ENCODE measurements at regions of chr1 and their contacts with region 1.

Region 1: GRCh38 chr1:196148367-196148970 is 459.8 kb downstream of the KCNT2 start:
- DNase-seq: no peak
- ATAC-seq: no peak
- H3K4me3 ChIP-seq: no peak overlapping the region
- H3K27ac ChIP-seq: no peak overlapping the region
- H3K4me1 ChIP-seq: peaks cover 0 to 8% (median 0%) of the 10 kb centered on the region in 9 donors
- H3K27me3 ChIP-seq: no peaks in the 10 kb centered on the region
- CTCF ChIP-seq: peak; percentile 37 to 75 (median 62)

Region 2: GRCh38 chr1:195939844-195940243 is 208.6 kb before region 1 on chr1:
- intact Hi-C with region 1: loop called in 1 of 10 experiments (anchors 5 kb)
- DNase-seq: no peak
- ATAC-seq: peak in 1 of 8 donors; percentile 50
- H3K4me3 ChIP-seq: no peak overlapping the region
- H3K27ac ChIP-seq: no peak overlapping the region
- H3K4me1 ChIP-seq: no peaks in the 10 kb centered on the region
- H3K27me3 ChIP-seq: no peaks in the 10 kb centered on the region
- CTCF ChIP-seq: peak in 6 of 9 donors; percentile 24 to 39 (median 34)

Region 3: GRCh38 chr1:196309386-196309785 is 160.9 kb after region 1 on chr1:
- intact Hi-C with region 1: loop called in 6 of 10 experiments (anchors 5 to 10 kb)
- DNase-seq: no peak
- ATAC-seq: no peak
- H3K4me3 ChIP-seq: no peak overlapping the region
- H3K27ac ChIP-seq: no peak overlapping the region
- H3K4me1 ChIP-seq: no peaks in the 10 kb centered on the region
- H3K27me3 ChIP-seq: no peaks in the 10 kb centered on the region
- CTCF ChIP-seq: peak in 7 of 9 donors; percentile 16 to 50 (median 33)

Region 4: DNA sequence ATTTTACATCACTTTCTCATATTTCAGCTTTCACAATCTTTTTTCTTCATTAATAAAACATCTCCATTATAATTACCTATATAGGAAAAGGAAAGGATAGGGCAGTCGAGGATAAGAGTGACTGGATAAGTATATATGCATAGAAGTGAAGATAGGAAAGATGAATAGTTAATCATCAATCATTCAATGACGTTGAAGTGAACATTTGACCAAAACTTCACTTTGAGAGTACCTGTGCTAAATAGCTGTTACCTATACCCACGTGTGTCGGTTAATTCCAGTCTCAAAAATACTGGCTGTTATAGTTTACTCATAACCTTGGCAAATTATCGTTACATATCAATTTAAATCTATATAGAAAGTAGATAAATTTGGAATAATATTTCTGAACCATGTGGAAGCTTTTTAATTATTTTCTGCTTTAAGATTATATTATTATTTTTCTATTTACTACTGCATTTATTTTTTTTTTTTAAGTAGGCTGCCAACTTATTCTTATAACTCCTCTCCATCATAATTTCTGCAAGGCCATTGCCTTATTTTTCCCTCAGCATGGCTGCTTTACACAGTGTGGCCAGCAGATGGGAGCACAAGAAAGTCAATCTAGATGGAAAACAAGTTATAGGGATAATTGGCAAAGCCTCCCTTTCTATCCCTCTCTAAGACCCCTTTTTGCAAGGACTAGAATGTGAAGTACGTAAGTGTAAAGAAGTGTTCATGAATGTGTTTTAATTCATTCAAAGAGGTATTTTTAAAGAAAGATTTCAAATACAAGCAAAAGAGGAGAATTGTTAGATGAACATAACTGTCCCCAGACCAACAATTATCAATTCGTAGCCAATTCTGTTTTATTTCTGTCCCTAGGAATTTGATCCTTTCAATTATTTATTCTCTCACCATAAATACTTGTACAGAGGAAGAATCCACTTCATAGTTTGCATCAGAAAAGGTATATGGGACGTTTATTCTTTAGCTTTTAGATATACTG is 169.4 kb after region 1 on chr1:
- intact Hi-C with region 1: loop called in 3 of 10 experiments (anchors 5 to 10 kb)
- DNase-seq: peak in 1 of 2 donors; percentile 7
- ATAC-seq: no peak
- H3K4me3 ChIP-seq: no peak overlapping the region
- H3K27ac ChIP-seq: no peak overlapping the region
- H3K4me1 ChIP-seq: no peaks in the 10 kb centered on the region
- H3K27me3 ChIP-seq: no peaks in the 10 kb centered on the region
- CTCF ChIP-seq: peak in 7 of 9 donors; percentile 32 to 63 (median 53)

Region 5: DNA sequence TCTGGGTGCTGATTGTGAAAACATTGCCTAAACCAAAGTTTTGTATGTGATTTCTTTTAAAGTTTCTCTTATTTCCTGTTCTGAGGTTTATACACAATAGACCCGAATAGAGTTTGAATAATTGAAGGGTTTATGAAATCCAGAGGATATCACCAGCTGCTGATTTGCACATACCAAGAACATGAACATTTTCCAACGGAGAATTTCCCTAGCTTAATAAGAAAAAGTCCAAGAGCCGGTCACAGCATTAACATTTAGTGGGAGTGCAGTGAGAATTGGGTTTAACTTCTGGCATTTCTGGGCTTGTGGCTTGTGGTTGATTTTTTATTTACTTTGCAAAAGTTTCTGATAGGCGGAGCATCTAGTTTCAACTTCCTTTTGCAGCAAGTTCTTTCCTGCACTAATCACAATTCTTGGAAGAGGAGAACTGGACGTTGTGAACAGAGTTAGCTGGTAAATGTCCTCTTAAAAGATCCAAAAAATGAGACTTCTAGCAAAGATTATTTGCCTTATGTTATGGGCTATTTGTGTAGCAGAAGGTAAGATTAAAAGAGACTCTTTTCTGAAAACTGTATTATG is 503.3 kb after region 1 on chr1 and contains the start of gene CFH:
- intact Hi-C with region 1: loop called in 1 of 10 experiments (anchors 10 kb)
- DNase-seq: peak in 1 of 2 donors; percentile 10
- ATAC-seq: peak in 7 of 8 donors; percentile 47 to 83 (median 74)
- H3K4me3 ChIP-seq: peak within 1 kb of the TSS in 9 of 10 donors; percentile 2 to 53 (median 39)
- H3K27ac ChIP-seq: peak within 1 kb of the TSS in 7 of 10 donors; percentile 36 to 78 (median 56)
- H3K4me1 ChIP-seq: peaks cover 0 to 5% (median 0%) of the 10 kb centered on the region in 9 donors
- H3K27me3 ChIP-seq: no peaks in the 10 kb centered on the region
- CTCF ChIP-seq: no peak
- total RNA-seq, gene CFH: 12.7 to 50.5 (median 28.5) TPM

Region 6: DNA sequence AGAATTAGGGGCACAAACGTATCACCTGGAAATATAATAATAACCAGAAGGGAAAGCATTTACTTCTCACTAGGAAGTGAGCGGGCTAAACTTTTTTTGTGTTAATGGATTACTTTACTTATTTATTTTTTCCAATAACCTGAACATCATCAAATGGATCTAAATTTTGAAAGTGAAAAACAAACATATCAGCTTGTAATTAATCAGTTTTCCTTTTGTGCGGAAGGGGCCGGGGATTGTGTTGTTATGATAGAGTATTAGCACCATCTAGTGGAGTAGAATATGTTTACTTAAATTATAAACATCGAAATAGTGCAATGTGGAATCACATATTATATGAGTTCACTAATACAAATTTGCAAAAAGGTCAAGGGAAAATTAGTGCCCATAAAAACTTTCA is 512.4 kb after region 1 on chr1:
- intact Hi-C with region 1: loop called in 8 of 10 experiments (anchors 2 to 10 kb)
- DNase-seq: no peak
- ATAC-seq: peak in 7 of 8 donors; percentile 51 to 82 (median 72)
- H3K4me3 ChIP-seq: peak overlapping the region in 7 of 10 donors; percentile 3 to 42 (median 28)
- H3K27ac ChIP-seq: no peak overlapping the region
- H3K4me1 ChIP-seq: peaks cover 0 to 16% (median 0%) of the 10 kb centered on the region in 9 donors
- H3K27me3 ChIP-seq: no peaks in the 10 kb centered on the region
- CTCF ChIP-seq: peak; percentile 25 to 78 (median 55)

Measured in heart right ventricle (tissue), 16 donors.